MCF 10A (cell line): ENCODE measurements at regions of chr7 and their contacts with region 1.

Region 1: GRCh38 chr7:27739909-27740448 is at the start of gene TAX1BP1:
- DNase-seq: peak; percentile 93
- H3K4me3 Mint-ChIP-seq: peak within 1 kb of the TSS; percentile 86
- H3K27ac Mint-ChIP-seq: peak within 1 kb of the TSS; percentile 99
- H3K4me1 Mint-ChIP-seq: peaks cover 22% of the 10 kb centered on the region
- H3K27me3 Mint-ChIP-seq: no peaks in the 10 kb centered on the region
- CTCF ChIP-seq: no peak
- total RNA-seq, gene TAX1BP1: 95.0 and 95.9 TPM in 2 replicates

Region 2: DNA sequence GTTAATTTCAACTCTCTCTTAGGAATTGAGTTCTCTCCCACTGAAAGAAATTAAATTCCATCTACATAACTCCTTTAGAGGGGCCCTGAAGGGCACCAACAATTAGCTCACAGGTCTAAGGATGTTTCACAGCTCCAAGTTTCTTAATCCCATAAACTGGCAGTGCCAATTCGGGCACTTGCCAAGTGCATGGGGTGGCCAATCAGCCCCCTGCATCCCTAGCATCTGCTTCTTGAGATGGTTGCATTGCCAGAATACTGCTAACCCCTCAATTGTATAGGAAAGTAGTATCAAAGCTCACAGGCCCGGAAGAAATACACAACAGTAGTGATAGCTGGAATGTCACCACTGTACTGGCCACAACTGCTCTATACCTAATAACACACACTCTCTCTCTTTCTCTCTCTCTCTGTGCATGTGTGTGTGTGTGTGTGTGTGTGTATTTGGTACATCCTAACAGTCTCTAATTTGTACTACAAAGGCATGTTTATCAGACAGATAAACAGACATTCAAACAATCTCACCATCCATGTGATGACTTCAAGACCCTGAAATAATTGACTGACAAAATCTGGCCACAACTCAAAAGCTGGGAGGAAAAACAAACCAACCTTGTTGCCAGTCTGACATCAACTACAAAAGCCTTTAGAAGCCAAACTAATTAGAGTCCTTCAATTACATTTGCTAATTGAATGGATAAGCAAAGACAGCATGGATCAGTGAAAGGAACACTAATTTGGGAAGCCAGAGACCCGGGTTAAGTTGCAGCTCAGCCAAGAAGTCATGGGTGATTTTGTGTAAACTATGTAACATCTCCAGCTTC is 105.1 kb before region 1 on chr7:
- CTCF ChIA-PET with region 1: no interaction called
- POLR2A ChIA-PET with region 1: interaction called, 20 read pairs
- intact Hi-C with region 1: no loop called
- DNase-seq: no peak
- H3K4me3 Mint-ChIP-seq: no peak overlapping the region
- H3K27ac Mint-ChIP-seq: no peak overlapping the region
- H3K4me1 Mint-ChIP-seq: peaks cover 23% of the 10 kb centered on the region
- H3K27me3 Mint-ChIP-seq: no peaks in the 10 kb centered on the region
- CTCF ChIP-seq: no peak

Region 3: DNA sequence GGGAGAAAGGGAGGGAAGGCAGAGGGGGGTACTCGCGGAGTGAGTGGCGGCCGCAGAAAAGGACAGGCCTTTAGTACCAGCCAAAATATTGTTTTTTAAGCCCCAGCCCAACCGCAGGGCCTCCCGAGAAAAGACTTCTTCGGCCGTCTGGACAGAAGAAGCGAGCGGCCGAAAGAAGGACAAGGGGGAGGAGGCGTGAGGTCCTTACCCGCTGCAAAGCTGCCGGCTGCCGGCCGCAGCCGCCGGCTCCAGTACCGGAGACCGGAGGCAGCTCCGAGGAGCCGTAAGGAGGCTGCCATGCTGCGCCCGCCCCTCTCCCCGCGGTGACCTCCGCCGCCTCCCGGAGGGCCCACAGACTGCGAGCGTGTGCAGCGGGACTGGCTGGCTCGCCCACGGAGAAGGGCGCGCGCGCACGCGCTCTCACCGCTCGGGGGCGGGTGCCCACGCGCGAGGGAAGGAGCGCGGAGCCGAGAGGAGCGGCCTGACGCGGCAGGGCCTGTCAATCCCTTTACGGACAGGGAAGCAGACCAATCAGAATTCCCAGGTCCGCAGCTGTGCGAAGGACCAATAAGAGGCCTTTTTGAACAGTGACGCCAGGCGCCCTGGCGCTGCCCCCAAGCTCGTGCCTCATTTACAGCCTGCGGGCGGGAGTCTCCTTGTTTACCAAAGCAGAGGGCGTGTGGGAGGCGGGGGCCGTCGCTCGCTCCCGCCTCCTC is 77.3 kb before region 1 on chr7 and contains the start of gene HIBADH:
- CTCF ChIA-PET with region 1: interaction called, 5 read pairs
- POLR2A ChIA-PET with region 1: interaction called, 180 read pairs
- intact Hi-C with region 1: loop called (anchors 1 kb)
- DNase-seq: peak; percentile 99
- H3K4me3 Mint-ChIP-seq: peak within 1 kb of the TSS; percentile 78
- H3K27ac Mint-ChIP-seq: peak within 1 kb of the TSS; percentile 82
- H3K4me1 Mint-ChIP-seq: no peaks in the 10 kb centered on the region
- H3K27me3 Mint-ChIP-seq: no peaks in the 10 kb centered on the region
- CTCF ChIP-seq: peak; percentile 16
- total RNA-seq, gene HIBADH: 51.5 and 61.1 TPM in 2 replicates

Region 4: GRCh38 chr7:27697861-27698430 is 42.0 kb before region 1 on chr7:
- CTCF ChIA-PET with region 1: no interaction called
- POLR2A ChIA-PET with region 1: interaction called, 18 read pairs
- intact Hi-C with region 1: no loop called
- DNase-seq: peak; percentile 45
- H3K4me3 Mint-ChIP-seq: no peak overlapping the region
- H3K27ac Mint-ChIP-seq: no peak overlapping the region
- H3K4me1 Mint-ChIP-seq: peaks cover 5% of the 10 kb centered on the region
- H3K27me3 Mint-ChIP-seq: no peaks in the 10 kb centered on the region
- CTCF ChIP-seq: no peak

Region 5: GRCh38 chr7:27767374-27767773 is 27.4 kb after region 1 on chr7:
- CTCF ChIA-PET with region 1: interaction called, 7 read pairs
- POLR2A ChIA-PET with region 1: interaction called, 41 read pairs
- intact Hi-C with region 1: no loop called
- DNase-seq: no peak
- H3K4me3 Mint-ChIP-seq: no peak overlapping the region
- H3K27ac Mint-ChIP-seq: no peak overlapping the region
- H3K4me1 Mint-ChIP-seq: peaks cover 10% of the 10 kb centered on the region
- H3K27me3 Mint-ChIP-seq: no peaks in the 10 kb centered on the region
- CTCF ChIP-seq: no peak

Region 6: DNA sequence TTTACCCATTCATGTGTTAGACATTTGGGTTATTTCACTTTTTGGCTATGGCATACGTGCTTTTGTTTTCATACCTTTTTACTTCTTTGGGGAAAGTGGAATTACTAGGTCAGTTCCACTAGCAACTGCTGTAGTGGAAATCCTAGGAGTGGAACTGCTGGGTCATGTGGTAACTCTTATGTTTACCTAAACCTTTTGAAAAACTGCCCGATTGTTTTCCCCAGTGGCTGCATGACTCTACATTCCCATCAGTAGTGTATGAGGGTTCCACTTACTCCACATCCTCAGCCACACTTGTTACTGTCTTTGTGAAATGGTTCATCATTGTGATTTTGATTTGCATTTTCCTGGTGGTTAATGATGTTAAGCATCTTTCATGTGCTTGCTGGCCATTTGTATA is 82.3 kb after region 1 on chr7:
- CTCF ChIA-PET with region 1: no interaction called
- POLR2A ChIA-PET with region 1: no interaction called
- intact Hi-C with region 1: no loop called
- DNase-seq: no peak
- H3K4me3 Mint-ChIP-seq: no peak overlapping the region
- H3K27ac Mint-ChIP-seq: no peak overlapping the region
- H3K4me1 Mint-ChIP-seq: no peaks in the 10 kb centered on the region
- H3K27me3 Mint-ChIP-seq: no peaks in the 10 kb centered on the region
- CTCF ChIP-seq: no peak

Region 7: GRCh38 chr7:27910326-27910725 is 170.3 kb after region 1 on chr7:
- CTCF ChIA-PET with region 1: no interaction called
- POLR2A ChIA-PET with region 1: no interaction called
- intact Hi-C with region 1: no loop called
- DNase-seq: no peak
- H3K4me3 Mint-ChIP-seq: no peak overlapping the region
- H3K27ac Mint-ChIP-seq: no peak overlapping the region
- H3K4me1 Mint-ChIP-seq: no peaks in the 10 kb centered on the region
- H3K27me3 Mint-ChIP-seq: no peaks in the 10 kb centered on the region
- CTCF ChIP-seq: no peak